ENCODE measurements at regions of chr22 and their contacts with region 1.

Region 1: DNA sequence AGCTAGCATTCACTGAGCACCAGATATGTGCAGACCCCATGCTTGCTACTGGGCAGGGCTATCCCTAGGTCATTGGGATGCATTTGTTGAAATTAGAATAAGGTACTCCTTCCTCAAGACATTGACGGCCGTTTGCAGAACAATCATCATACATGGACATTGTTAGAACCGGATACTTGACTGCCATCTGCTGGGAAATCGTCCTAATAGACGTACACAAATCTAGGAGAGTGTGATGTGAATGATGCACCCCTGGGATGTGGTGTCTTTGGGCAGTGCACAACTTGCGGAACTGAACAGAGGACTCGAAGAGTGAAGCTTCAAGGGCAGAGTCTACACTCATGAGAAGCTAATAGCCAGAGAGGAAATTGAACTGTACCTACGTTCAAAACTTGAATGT is 35.9 kb downstream of the MYO18B start:
- DNase-seq: peak; percentile 16
- H3K4me3 Mint-ChIP-seq: no peak overlapping the region
- H3K27ac Mint-ChIP-seq: no peak overlapping the region
- H3K4me1 Mint-ChIP-seq: peaks cover 3% of the 10 kb centered on the region
- H3K27me3 Mint-ChIP-seq: peaks cover 3% of the 10 kb centered on the region

Region 2: DNA sequence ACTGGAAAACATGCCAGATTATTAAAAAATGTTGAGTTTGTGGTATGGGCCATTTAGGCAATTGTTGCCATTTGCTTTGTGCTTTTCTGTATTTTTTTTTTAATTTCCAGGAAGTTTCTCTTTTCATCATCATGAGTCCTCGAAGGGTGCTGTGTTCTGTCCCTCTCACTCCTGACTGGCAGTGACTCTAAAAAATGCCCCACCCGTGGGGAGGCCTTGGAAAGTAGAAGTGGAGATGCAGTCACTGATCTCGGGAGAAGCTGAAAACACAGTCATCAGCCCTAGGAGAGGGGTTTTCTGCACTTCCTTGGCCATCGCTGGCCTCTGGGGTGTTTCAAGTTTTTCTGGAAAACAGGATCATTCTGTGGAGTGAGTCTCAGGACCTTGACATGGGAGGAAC is 311.9 kb before region 1 on chr22:
- CTCF ChIA-PET with region 1: interaction called, 71 read pairs
- POLR2A ChIA-PET with region 1: no interaction called
- intact Hi-C with region 1: loop called (anchors 1 kb)
- DNase-seq: no peak
- H3K4me3 Mint-ChIP-seq: no peak overlapping the region
- H3K27ac Mint-ChIP-seq: no peak overlapping the region
- H3K4me1 Mint-ChIP-seq: no peaks in the 10 kb centered on the region
- H3K27me3 Mint-ChIP-seq: no peaks in the 10 kb centered on the region

Region 3: GRCh38 chr22:26330966-26331625 is 553.2 kb after region 1 on chr22:
- CTCF ChIA-PET with region 1: interaction called, 6 read pairs
- POLR2A ChIA-PET with region 1: no interaction called
- intact Hi-C with region 1: loop called (anchors 5 kb)
- DNase-seq: peak; percentile 65
- H3K4me3 Mint-ChIP-seq: no peak overlapping the region
- H3K27ac Mint-ChIP-seq: no peak overlapping the region
- H3K4me1 Mint-ChIP-seq: no peaks in the 10 kb centered on the region
- H3K27me3 Mint-ChIP-seq: peaks cover 14% of the 10 kb centered on the region